Right cardiac atrium (tissue), 5 donors: ENCODE measurements at regions of chr12 and their contacts with region 1.

Region 1: GRCh38 chr12:46933947-46934346 is 108.2 kb upstream of the SLC38A4 start:
- DNase-seq: no peak
- ATAC-seq: peak; percentile 52 to 55
- H3K4me3 ChIP-seq: no peak overlapping the region
- H3K27ac ChIP-seq: no peak overlapping the region
- H3K4me1 ChIP-seq: no peaks in the 10 kb centered on the region
- H3K27me3 ChIP-seq: no peaks in the 10 kb centered on the region

Region 2: GRCh38 chr12:45849289-45849688 is 1084.7 kb before region 1 on chr12:
- intact Hi-C with region 1: no loop called
- DNase-seq: no peak
- ATAC-seq: no peak
- H3K4me3 ChIP-seq: no peak overlapping the region
- H3K27ac ChIP-seq: no peak overlapping the region
- H3K4me1 ChIP-seq: peaks cover 6% of the 10 kb centered on the region
- H3K27me3 ChIP-seq: no peaks in the 10 kb centered on the region

Region 3: DNA sequence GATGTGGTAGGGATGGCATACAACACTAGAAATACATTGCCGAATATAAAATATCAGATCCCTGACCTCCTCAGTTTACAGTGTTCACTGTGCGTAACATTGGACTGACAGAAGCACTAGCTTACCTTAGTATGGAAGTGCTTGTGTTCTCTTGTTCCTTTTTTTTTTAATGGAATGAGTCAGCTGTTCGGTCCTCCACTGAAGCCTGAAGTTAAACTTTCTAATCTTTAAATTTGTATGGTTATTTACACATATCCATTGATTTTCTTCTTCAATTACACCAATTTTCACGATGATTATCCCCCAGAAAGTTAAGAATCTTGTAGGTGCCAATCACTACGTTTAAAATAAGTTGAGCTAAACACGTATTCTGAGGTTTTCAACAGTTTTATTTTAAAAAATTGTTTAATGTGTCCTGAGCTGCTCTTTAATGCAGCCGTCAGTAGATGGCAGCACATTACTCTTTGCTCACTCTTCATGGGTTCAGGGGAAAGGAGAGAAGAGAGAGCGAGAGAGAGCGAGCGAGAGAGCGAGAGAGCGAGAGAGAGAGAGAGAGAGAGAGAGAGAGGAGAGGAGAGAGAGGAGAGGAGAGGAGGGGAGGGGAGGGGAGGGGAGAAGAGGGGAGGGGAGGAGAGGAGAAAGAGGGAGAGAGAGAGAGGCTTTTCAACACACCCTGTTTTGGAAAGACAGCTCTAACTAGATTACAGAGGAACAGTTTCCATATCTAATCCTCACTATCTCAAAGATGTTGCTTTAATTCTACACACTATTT is 808.9 kb before region 1 on chr12:
- intact Hi-C with region 1: loop called in 1 of 4 experiments (anchors 10 kb)
- DNase-seq: peak in 1 of 3 donors; percentile 63
- ATAC-seq: peak; percentile 89 to 90
- H3K4me3 ChIP-seq: no peak overlapping the region
- H3K27ac ChIP-seq: no peak overlapping the region
- H3K4me1 ChIP-seq: no peaks in the 10 kb centered on the region
- H3K27me3 ChIP-seq: no peaks in the 10 kb centered on the region

Region 4: GRCh38 chr12:47102845-47103651 is 169.1 kb after region 1 on chr12:
- intact Hi-C with region 1: no loop called
- DNase-seq: no peak
- ATAC-seq: peak; percentile 65 to 75
- H3K4me3 ChIP-seq: no peak overlapping the region
- H3K27ac ChIP-seq: no peak overlapping the region
- H3K4me1 ChIP-seq: peaks cover under 1% of the 10 kb centered on the region
- H3K27me3 ChIP-seq: no peaks in the 10 kb centered on the region